Caco-2 (cell line): ENCODE measurements at regions of chr7 and their contacts with region 1.

Region 1: GRCh38 chr7:38215735-38216670 is 38.0 kb downstream of the STARD3NL start:
- DNase-seq: peak; percentile 65 to 68
- H3K4me3 ChIP-seq: no peak overlapping the region
- H3K4me3 Mint-ChIP-seq: no peak overlapping the region
- H3K27ac Mint-ChIP-seq: no peak overlapping the region
- H3K4me1 ChIP-seq: no peaks in the 10 kb centered on the region
- H3K4me1 Mint-ChIP-seq: no peaks in the 10 kb centered on the region
- H3K27me3 ChIP-seq: no peaks in the 10 kb centered on the region
- H3K27me3 Mint-ChIP-seq: no peaks in the 10 kb centered on the region
- CTCF ChIP-seq: peak; percentile 89 to 90

Region 2: DNA sequence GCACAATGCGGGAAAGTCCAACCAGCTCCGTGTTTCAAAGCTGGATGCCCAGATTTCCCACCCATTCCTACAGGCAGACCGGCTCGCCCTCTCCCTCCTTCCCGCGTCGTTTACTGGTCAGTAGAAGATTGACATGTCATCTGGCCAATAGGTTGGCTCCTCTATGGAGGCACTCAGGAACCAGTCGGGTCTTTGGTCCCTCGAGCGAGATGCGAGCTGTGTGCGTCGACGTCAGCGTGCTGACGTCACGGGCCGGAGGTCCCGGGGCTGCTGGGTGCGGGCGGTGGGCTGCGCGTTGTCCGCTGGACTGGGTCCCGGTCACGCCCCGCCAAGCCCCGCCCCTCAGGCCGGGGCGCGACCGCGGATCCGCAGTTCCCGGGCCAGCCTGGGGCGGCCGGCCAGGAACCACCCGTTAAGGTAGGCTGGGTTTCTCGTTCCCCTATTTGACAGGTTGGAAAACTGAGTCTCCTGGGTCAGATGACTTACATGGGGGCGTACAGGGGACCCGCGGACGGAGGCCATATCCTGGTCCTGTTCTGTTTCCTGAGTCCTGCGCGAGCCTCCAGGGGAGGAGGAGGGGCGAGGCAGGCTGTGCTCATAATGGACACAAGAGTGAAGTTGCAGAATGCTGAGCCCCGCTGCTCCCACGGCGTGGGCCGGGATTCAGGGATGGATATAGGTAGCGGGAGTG is 37.9 kb before region 1 on chr7 and contains the start of gene STARD3NL:
- CTCF ChIA-PET with region 1: interaction called, 6 read pairs
- POLR2A ChIA-PET with region 1: interaction called, 5 read pairs
- intact Hi-C with region 1: loop called (anchors 1 kb)
- DNase-seq: peak; percentile 98 to 100
- H3K4me3 ChIP-seq: peak within 1 kb of the TSS; percentile 76
- H3K4me3 Mint-ChIP-seq: peak within 1 kb of the TSS; percentile 94
- H3K27ac Mint-ChIP-seq: peak within 1 kb of the TSS; percentile 90
- H3K4me1 ChIP-seq: no peaks in the 10 kb centered on the region
- H3K4me1 Mint-ChIP-seq: peaks cover 7% of the 10 kb centered on the region
- H3K27me3 ChIP-seq: no peaks in the 10 kb centered on the region
- H3K27me3 Mint-ChIP-seq: peaks cover 2% of the 10 kb centered on the region
- CTCF ChIP-seq: no peak
- total RNA-seq, gene STARD3NL: 32.6 and 33.5 TPM in 2 replicates

Region 3: GRCh38 chr7:38190011-38190410 is 26.0 kb before region 1 on chr7:
- CTCF ChIA-PET with region 1: no interaction called
- POLR2A ChIA-PET with region 1: no interaction called
- intact Hi-C with region 1: no loop called
- DNase-seq: no peak
- H3K4me3 ChIP-seq: no peak overlapping the region
- H3K4me3 Mint-ChIP-seq: no peak overlapping the region
- H3K27ac Mint-ChIP-seq: no peak overlapping the region
- H3K4me1 ChIP-seq: peaks cover 10% of the 10 kb centered on the region
- H3K4me1 Mint-ChIP-seq: peaks cover 9% of the 10 kb centered on the region
- H3K27me3 ChIP-seq: no peaks in the 10 kb centered on the region
- H3K27me3 Mint-ChIP-seq: no peaks in the 10 kb centered on the region
- CTCF ChIP-seq: no peak

Region 4: GRCh38 chr7:38318803-38319416 is 102.9 kb after region 1 on chr7:
- CTCF ChIA-PET with region 1: interaction called, 6 read pairs
- POLR2A ChIA-PET with region 1: no interaction called
- intact Hi-C with region 1: loop called (anchors 1 kb)
- DNase-seq: peak; percentile 71
- H3K4me3 ChIP-seq: no peak overlapping the region
- H3K4me3 Mint-ChIP-seq: peak overlapping the region; percentile 21
- H3K27ac Mint-ChIP-seq: no peak overlapping the region
- H3K4me1 ChIP-seq: 0 out of 2 replicates have a peak, but pooled peaks cover 5% of the 10 kb centered on the region
- H3K4me1 Mint-ChIP-seq: peaks cover 11% of the 10 kb centered on the region
- H3K27me3 ChIP-seq: no peaks in the 10 kb centered on the region
- H3K27me3 Mint-ChIP-seq: peaks cover 8% of the 10 kb centered on the region
- CTCF ChIP-seq: peak; percentile 57 to 69

Region 5: DNA sequence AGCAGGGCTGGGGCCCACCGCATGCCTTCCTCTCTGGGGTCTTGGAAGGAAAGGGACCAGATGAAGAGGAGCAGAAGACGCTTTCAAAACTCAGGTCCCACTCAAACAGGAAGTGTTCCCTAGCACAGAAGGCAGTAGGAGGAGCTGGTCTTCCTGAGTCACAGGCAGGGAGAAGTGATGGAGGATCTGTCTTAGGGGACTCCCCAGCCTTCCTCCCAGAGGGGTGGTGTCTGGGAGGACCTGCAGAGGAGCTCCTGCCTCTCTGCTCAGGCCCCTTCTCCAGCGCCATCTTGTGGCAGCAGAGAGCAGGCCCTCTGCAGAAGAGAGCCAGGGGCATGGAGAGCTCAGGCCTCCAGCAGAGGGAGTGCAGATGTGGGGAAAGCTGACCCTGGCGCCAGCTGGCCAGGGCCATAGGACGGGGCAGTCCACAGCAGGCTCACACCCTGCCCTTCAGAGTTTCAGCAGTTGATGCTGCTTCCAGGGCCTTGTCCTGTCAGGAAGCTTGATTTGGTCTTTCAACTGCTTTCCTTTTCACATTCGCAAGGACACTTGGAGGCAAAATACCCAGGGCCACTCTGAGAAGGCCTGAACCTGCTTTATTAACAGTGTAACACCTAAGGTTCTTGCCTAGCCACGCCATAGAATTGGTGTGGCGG is 119.6 kb after region 1 on chr7:
- CTCF ChIA-PET with region 1: interaction called, 7 read pairs
- POLR2A ChIA-PET with region 1: no interaction called
- intact Hi-C with region 1: loop called (anchors 1 kb)
- DNase-seq: peak; percentile 86
- H3K4me3 ChIP-seq: no peak overlapping the region
- H3K4me3 Mint-ChIP-seq: peak overlapping the region; percentile 35
- H3K27ac Mint-ChIP-seq: peak overlapping the region; percentile 63
- H3K4me1 ChIP-seq: peaks cover 25% of the 10 kb centered on the region
- H3K4me1 Mint-ChIP-seq: peaks cover 21% of the 10 kb centered on the region
- H3K27me3 ChIP-seq: no peaks in the 10 kb centered on the region
- H3K27me3 Mint-ChIP-seq: no peaks in the 10 kb centered on the region
- CTCF ChIP-seq: peak; percentile 90 to 97